Breast epithelium (tissue), 4 donors: ENCODE measurements at regions of chr14 and their contacts with region 1.

Region 1: GRCh38 chr14:23763394-23763793 is 127.2 kb downstream of the DHRS2 start:
- DNase-seq: no peak
- H3K4me3 ChIP-seq: no peak overlapping the region
- H3K27ac ChIP-seq: no peak overlapping the region
- H3K4me1 ChIP-seq: no peaks in the 10 kb centered on the region
- H3K27me3 ChIP-seq: no peaks in the 10 kb centered on the region
- CTCF ChIP-seq: no peak
- POLR2A ChIP-seq: no peak

Region 2: GRCh38 chr14:22556021-22556989 is 1207.1 kb before region 1 on chr14:
- intact Hi-C with region 1: no loop called
- DNase-seq: peak in 1 of 2 donors; percentile 71
- H3K4me3 ChIP-seq: peak overlapping the region in 2 of 3 donors; percentile 32 to 58
- H3K27ac ChIP-seq: peak overlapping the region; percentile 73 to 88
- H3K4me1 ChIP-seq: peaks cover 0 to 9% of the 10 kb centered on the region in 2 donors
- H3K27me3 ChIP-seq: no peaks in the 10 kb centered on the region
- CTCF ChIP-seq: no peak
- POLR2A ChIP-seq: no peak

Region 3: DNA sequence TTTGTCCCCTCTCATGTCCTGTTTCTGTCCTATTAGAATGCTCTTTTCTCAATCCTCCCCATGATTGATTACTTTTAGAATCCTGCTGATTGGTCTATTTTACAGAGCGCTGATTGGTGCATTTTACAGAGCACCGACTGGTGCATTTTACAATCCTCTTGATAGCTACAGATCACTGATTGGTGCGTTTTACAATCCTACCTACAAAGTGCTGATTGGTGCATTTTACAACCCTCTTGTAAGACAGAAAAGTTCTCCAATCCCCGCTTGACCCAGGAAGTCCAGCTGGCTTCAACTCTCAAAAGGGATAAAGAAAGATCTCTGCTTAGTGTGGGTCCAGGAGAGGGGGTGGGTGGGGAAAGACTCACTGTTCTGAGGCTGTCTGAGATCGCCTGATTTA is 56.0 kb before region 1 on chr14:
- intact Hi-C with region 1: loop called (anchors 2 kb)
- DNase-seq: no peak
- H3K4me3 ChIP-seq: no peak overlapping the region
- H3K27ac ChIP-seq: no peak overlapping the region
- H3K4me1 ChIP-seq: no peaks in the 10 kb centered on the region
- H3K27me3 ChIP-seq: no peaks in the 10 kb centered on the region
- CTCF ChIP-seq: no peak
- POLR2A ChIP-seq: no peak